GM10248 (cell line): ENCODE measurements at regions of chr4 and their contacts with region 1.

Region 1: DNA sequence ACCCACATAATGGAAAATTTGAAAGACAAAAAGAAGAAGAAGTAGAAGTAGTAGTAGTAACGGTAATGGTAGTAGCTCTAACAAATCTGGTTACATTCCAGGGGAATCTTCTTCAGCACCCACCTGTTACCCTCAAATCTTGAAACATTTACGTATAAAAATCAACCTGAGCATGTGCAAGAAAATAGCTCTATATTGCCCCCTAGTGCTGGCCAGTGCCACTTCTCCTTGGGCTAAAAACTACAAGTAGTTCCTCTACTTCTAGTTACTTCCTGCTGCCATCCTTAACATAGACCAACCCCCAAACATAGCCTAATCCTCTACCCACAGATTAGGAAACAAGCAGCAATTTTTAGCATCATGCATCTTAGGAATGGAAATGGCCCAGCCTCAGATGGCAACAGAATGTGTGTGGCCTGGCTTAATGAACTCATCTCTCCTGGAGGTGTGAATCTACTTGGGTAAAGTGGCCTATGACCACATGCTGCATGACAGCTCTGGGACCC is 3.1 kb downstream of the PDGFC start:
- DNase-seq: peak; percentile 25
- CTCF ChIP-seq: peak; percentile 51

Region 2: GRCh38 chr4:156933633-156934258 is 34.8 kb before region 1 on chr4:
- CTCF ChIA-PET with region 1: no interaction called
- POLR2A ChIA-PET with region 1: no interaction called
- DNase-seq: no peak
- CTCF ChIP-seq: no peak

Region 3: DNA sequence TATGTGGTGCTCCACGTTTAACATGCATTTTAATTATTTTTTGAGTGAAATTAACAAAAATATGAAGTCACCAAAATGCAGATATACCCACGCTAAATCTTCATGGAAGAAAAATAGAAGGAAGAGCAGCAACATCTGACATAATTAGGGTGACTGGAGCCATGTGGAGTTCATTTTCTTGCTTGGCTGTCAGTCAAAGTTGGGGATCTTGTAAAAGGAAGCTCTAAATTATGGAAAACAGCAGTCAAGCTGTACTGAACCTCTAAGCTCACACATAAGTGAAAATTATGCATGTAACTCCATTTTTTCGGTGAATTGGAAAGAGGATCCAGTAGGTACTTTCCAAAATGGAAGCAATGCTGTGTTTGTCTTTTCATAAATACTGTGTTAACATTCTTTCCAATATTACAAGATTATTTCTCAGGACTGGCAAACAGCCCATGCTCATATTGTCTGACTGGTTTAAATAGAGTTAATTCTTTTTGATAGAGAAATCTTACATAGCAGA is 12.8 kb after region 1 on chr4:
- CTCF ChIA-PET with region 1: interaction called, 11 read pairs
- POLR2A ChIA-PET with region 1: no interaction called
- DNase-seq: no peak
- CTCF ChIP-seq: no peak